OCI-LY7 (cell line): ENCODE measurements at regions of chr13 and their contacts with region 1.

Region 1: GRCh38 chr13:40190641-40191100 is 475.8 kb downstream of the FOXO1 start:
- DNase-seq: peak; percentile 91
- H3K4me3 ChIP-seq: peak overlapping the region; percentile 12
- H3K27ac ChIP-seq: peak overlapping the region; percentile 48
- H3K4me1 ChIP-seq: peaks cover 23% of the 10 kb centered on the region
- CTCF ChIP-seq: no peak; the same call in 1 of the 2 replicates

Region 2: DNA sequence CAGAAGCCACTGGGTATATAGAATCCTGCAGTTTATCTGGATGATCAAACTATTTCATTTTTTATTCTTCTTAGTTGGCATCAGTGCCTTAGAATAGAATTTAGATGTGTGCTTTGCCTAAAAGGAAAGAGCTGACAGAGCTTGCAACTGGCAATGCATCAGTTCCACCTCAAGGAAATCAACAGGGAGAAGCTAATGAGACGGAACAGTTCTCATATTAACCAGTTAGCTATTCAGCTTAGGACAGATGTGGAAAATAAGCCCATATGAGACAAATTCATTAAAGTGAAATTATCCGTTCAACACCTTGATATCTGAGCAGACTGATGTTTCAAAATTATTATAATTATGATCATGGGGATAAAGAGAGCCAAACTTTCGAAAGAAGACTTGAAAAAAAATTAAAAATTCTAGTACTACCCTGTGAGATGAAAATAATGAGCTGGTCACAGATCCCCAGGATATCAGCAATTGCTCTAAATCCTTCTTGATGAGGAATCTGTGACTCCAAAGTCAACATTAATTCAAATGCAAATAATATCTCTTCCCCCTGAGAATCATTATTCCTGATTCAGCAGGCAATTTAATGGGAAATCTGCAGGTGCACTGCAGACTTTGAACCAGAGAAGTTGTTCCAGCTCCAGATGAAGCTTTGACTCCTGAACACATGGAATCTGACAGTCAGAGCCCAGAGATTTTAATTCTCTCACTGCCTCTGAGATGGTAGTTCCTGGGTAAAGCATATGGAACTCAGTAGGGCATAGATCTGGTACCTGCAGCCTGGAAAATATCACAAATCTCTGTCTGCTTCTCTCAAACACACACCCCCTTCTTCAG is 11.0 kb before region 1 on chr13:
- CTCF ChIA-PET with region 1: no interaction called
- POLR2A ChIA-PET with region 1: interaction called, 11 read pairs
- intact Hi-C with region 1: no loop called
- DNase-seq: no peak
- H3K4me3 ChIP-seq: no peak overlapping the region
- H3K27ac ChIP-seq: no peak overlapping the region
- H3K4me1 ChIP-seq: no peaks in the 10 kb centered on the region
- CTCF ChIP-seq: no peak

Region 3: DNA sequence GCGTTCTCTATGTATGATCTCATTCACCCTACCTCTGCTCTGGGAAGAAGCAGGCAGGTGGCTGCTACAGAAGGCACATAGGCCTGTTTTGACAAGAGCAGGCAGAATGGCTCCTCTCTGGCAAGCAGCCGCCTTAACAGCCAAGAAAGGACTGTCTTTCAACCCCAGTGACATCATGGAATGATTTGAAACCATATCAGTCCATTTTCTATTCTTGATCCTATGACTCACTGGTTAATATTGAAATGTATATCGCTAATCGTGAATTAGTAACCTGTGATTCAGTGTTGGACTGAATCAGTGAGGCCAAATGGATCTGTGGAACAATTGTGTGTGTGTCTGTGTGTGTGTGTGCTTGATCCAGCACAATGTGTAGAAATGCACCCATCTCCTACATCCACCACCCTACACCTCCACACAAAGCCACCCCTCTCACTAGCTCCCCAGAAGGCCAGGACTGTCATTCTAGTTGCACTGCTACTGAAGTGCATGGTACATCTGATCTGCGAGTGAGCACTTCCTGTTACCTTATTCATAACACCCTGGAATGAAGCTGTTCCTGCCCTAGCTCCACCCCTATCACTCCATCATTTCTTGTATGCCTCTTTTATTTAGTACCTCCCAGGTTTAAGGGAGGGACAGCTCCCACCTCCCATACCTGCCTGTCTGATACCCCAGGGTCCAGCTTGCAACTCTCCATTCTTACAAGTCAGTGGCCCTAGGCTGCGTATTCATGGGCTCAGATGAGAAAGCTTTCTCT is 15.8 kb after region 1 on chr13:
- CTCF ChIA-PET with region 1: interaction called, 5 read pairs
- POLR2A ChIA-PET with region 1: interaction called, 27 read pairs
- intact Hi-C with region 1: no loop called
- DNase-seq: peak; percentile 82
- H3K4me3 ChIP-seq: peak overlapping the region; percentile 30
- H3K27ac ChIP-seq: peak overlapping the region; percentile 91
- H3K4me1 ChIP-seq: peaks cover 51% of the 10 kb centered on the region
- CTCF ChIP-seq: no peak